ENCODE measurements at regions of chr19 and their contacts with region 1.

Region 1: DNA sequence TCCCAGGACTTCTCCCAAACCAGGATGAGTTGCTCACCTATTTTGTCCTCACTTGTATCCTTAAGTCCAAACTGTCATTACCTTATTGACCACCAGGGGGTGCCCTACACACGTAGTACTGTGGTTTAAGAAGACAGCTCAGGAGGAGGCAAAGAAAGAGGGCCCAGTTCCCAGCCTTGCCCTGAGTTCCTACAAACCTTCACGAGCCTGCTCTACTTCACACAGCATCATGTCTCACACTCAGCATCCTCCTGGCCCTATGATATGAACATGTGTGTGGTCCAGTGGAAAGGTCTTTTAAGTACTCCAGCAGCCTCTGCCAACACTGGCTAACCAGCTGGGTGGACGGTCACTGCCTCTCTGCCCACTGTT is 8.1 kb upstream of the ZNF784 start:
- DNase-seq: peak; percentile 54 to 95 (median 60)
- ATAC-seq: peak; percentile 82
- H3K4me3 ChIP-seq: no peak overlapping the region
- H3K27ac ChIP-seq: no peak overlapping the region
- H3K4me1 ChIP-seq: peaks cover 13 to 22% of the 10 kb centered on the region in 2 experiments
- H3K27me3 ChIP-seq: no peaks in the 10 kb centered on the region
- CTCF ChIP-seq: peak; percentile 86 to 94 (median 90)
- EP300 ChIP-seq: no peak
- POLR2A ChIP-seq: no peak
- RAD21 ChIP-seq: peak; percentile 79 to 87

Region 2: GRCh38 chr19:54875506-54875905 is 756.9 kb before region 1 on chr19:
- CTCF ChIA-PET with region 1: no interaction called
- POLR2A ChIA-PET with region 1: no interaction called
- in situ Hi-C with region 1: loop called (anchors 10 kb)
- intact Hi-C with region 1: no loop called
- DNase-seq: no peak
- ATAC-seq: no peak
- H3K4me3 ChIP-seq: no peak overlapping the region
- H3K27ac ChIP-seq: no peak overlapping the region
- H3K4me1 ChIP-seq: no peaks in the 10 kb centered on the region
- H3K27me3 ChIP-seq: peaks cover 21 to 28% of the 10 kb centered on the region in 2 experiments
- CTCF ChIP-seq: no peak
- EP300 ChIP-seq: no peak
- POLR2A ChIP-seq: no peak
- RAD21 ChIP-seq: no peak

Region 3: GRCh38 chr19:55146078-55146704 is 486.3 kb before region 1 on chr19:
- CTCF ChIA-PET with region 1: no interaction called
- POLR2A ChIA-PET with region 1: no interaction called
- in situ Hi-C with region 1: loop called (anchors 25 kb)
- intact Hi-C with region 1: loop called (anchors 10 kb)
- DNase-seq: peak; percentile 88 to 92 (median 90)
- ATAC-seq: peak; percentile 87
- H3K4me3 ChIP-seq: peak overlapping the region; percentile 88
- H3K27ac ChIP-seq: peak overlapping the region; percentile 69
- H3K4me1 ChIP-seq: peaks cover 16 to 54% of the 10 kb centered on the region in 2 experiments
- H3K27me3 ChIP-seq: no peaks in the 10 kb centered on the region
- CTCF ChIP-seq: peak; percentile 84 to 93 (median 85)
- EP300 ChIP-seq: peak; percentile 57; the same call in 1 of the 2 replicates
- POLR2A ChIP-seq: no peak
- RAD21 ChIP-seq: peak; percentile 43 to 53

Region 4: DNA sequence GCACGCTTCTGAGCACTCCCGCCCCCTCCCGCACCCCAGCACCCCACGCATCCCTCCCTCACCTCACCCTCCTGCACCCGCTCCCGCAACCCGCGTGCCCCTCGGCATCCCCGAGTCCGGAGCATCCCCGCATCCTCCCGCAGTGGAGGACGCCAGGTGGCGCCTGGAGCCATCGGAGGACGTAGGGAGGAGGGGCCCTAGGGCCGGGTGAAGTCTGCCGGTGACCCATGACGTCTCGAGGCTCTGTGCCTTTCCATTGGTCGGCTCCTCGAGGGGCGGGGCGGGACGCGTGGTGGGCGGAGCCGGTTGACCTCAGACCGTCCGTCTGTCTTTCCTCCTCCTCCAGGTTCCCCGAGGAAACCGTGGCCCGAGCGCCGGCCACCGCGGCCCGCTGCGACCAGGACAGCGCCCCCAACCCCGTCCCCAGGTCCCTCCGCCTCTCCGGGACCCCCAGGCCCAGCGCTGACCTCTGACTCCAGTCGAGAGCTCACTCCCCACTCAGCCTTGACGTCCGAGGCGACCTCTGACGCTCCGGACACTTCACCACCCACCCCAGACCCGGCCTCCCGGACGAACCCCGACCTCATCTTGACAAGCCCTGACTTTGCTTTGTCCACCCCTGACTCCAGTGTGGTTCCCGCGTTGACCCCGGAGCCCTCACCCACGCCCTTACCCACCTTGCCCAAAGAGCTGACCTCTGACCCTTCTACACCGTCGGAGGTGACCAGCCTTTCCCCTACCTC is 115.4 kb before region 1 on chr19:
- CTCF ChIA-PET with region 1: interaction called, 73 read pairs
- POLR2A ChIA-PET with region 1: interaction called, 4 read pairs
- in situ Hi-C with region 1: loop called (anchors 5 kb)
- intact Hi-C with region 1: loop called (anchors 1 kb)
- DNase-seq: peak; percentile 95 to 100 (median 100)
- ATAC-seq: peak; percentile 100
- H3K4me3 ChIP-seq: peak overlapping the region; percentile 42
- H3K27ac ChIP-seq: peak overlapping the region; percentile 76
- H3K4me1 ChIP-seq: peaks cover 3 to 22% of the 10 kb centered on the region in 2 experiments; a peak in 3 of 5 replicates
- H3K27me3 ChIP-seq: peaks cover 3 to 16% of the 10 kb centered on the region in 2 experiments; a peak in 3 of 5 replicates
- CTCF ChIP-seq: peak; percentile 90 to 96 (median 96)
- EP300 ChIP-seq: no peak
- POLR2A ChIP-seq: 0 out of 2 replicates have a peak, but pooled peaks have one; percentile 49
- RAD21 ChIP-seq: peak; percentile 98 to 99

Region 5: GRCh38 chr19:55653758-55654539 is 21.5 kb after region 1 on chr19:
- CTCF ChIA-PET with region 1: interaction called, 27 read pairs
- POLR2A ChIA-PET with region 1: interaction called, 8 read pairs
- in situ Hi-C with region 1: no loop called
- intact Hi-C with region 1: no loop called
- DNase-seq: peak; percentile 79 to 99 (median 86)
- ATAC-seq: peak; percentile 91
- H3K4me3 ChIP-seq: peak overlapping the region; percentile 70
- H3K27ac ChIP-seq: peak overlapping the region; percentile 100
- H3K4me1 ChIP-seq: peaks cover 26 to 59% of the 10 kb centered on the region in 2 experiments; a peak in 4 of 5 replicates
- H3K27me3 ChIP-seq: no peaks in the 10 kb centered on the region
- CTCF ChIP-seq: peak; percentile 99 to 100 (median 100)
- EP300 ChIP-seq: peak; percentile 53; the same call in 1 of the 2 replicates
- POLR2A ChIP-seq: peak; percentile 94
- RAD21 ChIP-seq: peak; percentile 59 to 75

Region 6: DNA sequence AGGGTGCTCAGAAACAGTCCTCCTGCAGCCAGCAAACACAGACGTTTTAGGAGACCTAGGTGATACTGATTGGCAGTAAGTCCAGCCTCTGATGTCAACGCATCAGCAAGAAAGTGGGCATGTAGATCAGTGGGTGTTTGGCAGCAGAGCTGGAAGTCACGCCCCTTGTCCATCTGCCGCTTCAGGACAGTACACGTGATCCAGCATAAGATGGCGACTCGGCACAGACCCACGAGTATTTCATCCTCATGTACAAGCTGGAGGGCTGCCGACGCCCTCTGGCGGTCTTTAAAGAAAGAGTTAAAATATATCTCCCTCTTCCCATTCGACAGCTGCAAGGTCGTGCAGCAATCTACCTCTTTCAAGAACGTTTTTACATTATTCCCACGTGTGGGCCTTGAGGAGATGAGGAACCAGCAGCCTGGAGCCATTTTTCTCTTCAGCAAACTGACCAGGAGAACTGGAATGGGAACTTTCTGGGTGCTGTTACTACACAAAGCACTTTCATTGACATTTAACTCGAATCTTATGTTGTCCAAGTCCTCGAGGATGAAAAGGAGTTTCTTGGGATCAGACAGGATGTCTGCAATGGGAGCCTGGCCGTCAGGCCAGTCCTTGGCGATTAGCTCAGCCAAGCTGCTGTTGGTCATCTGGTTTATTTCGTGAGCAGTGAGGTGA is 177.1 kb after region 1 on chr19:
- CTCF ChIA-PET with region 1: interaction called, 8 read pairs
- POLR2A ChIA-PET with region 1: no interaction called
- in situ Hi-C with region 1: loop called (anchors 5 kb)
- intact Hi-C with region 1: loop called (anchors 1 kb)
- DNase-seq: peak; percentile 77 to 89 (median 80)
- ATAC-seq: peak; percentile 100
- H3K4me3 ChIP-seq: no peak overlapping the region
- H3K27ac ChIP-seq: no peak overlapping the region
- H3K4me1 ChIP-seq: peaks cover 0 to 2% of the 10 kb centered on the region in 2 experiments; a peak in 1 of 5 replicates
- H3K27me3 ChIP-seq: peaks cover 0 to 2% of the 10 kb centered on the region in 2 experiments; a peak in 1 of 5 replicates
- CTCF ChIP-seq: peak; percentile 82 to 87 (median 85)
- EP300 ChIP-seq: 0 out of 2 replicates have a peak, but pooled peaks have one; percentile 8
- POLR2A ChIP-seq: no peak
- RAD21 ChIP-seq: peak; percentile 32 to 81; a peak in 3 of 4 replicates